ENCODE measurements at regions of chr6 and their contacts with region 1.

Region 1: GRCh38 chr6:27753668-27754407 is 158.4 kb downstream of the OR2B2 start:
- DNase-seq: peak; percentile 39 to 62 (median 51)
- H3K4me3 ChIP-seq: peak overlapping the region; percentile 22 to 81 (median 32)
- H3K4me3 Mint-ChIP-seq: peak overlapping the region; percentile 73 to 90
- H3K27ac ChIP-seq: no peak overlapping the region
- H3K27ac Mint-ChIP-seq: peak overlapping the region; percentile 45 to 82 (median 61)
- H3K4me1 ChIP-seq: peaks cover 34 to 42% of the 10 kb centered on the region in 2 donors
- H3K4me1 Mint-ChIP-seq: peaks cover 37% of the 10 kb centered on the region
- H3K27me3 ChIP-seq: no peaks in the 10 kb centered on the region
- H3K27me3 Mint-ChIP-seq: peaks cover 0 to 5% (median under 1%) of the 10 kb centered on the region in 3 donors
- CTCF ChIP-seq: no peak

Region 2: DNA sequence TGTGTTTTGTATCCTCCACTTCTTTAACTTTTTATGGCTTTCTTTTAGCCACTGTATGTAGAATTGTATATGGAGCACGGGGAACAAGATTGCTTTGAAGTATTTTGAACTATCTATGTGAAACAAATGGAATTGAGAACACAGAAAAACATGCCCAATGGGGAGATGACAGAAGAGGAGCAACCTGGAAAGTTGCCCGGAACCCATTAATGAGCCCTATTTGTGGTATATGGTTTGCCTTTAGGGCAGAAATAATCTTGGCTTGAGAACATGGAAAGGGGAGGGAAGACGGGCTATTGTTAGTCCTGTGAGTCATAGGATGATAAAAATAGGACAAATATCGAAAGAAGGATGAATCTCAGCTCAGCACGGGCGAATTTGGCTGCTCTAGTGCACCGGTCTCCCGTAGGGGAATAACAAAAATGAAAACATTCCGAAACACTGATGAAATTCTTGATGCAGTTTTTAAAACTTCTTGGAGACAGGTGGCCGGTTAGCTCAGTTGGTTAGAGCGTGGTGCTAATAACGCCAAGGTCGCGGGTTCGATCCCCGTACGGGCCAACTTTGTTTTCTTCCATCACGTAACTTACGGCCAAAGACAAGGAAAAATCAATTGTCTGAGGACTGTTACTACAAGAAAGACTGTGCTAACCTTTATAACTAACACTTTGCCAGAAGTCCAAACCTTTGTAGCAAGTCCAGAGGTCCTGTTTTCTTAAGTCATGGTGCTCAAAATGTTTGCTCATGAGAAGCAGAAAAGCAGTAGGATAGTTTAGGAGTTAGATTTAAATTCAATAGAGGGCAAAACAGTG is 1200.0 kb before region 1 on chr6:
- intact Hi-C with region 1: loop called in 1 of 2 experiments (anchors 10 kb)
- DNase-seq: peak; percentile 69 to 83 (median 78)
- H3K4me3 ChIP-seq: peak overlapping the region; percentile 41 to 81 (median 78)
- H3K4me3 Mint-ChIP-seq: no peak overlapping the region
- H3K27ac ChIP-seq: peak overlapping the region in 1 of 2 donors; percentile 21
- H3K27ac Mint-ChIP-seq: no peak overlapping the region
- H3K4me1 ChIP-seq: peaks cover 39 to 40% of the 10 kb centered on the region in 2 donors
- H3K4me1 Mint-ChIP-seq: peaks cover 13% of the 10 kb centered on the region
- H3K27me3 ChIP-seq: no peaks in the 10 kb centered on the region
- H3K27me3 Mint-ChIP-seq: peaks cover 2 to 8% (median 3%) of the 10 kb centered on the region in 3 donors
- CTCF ChIP-seq: no peak

Region 3: DNA sequence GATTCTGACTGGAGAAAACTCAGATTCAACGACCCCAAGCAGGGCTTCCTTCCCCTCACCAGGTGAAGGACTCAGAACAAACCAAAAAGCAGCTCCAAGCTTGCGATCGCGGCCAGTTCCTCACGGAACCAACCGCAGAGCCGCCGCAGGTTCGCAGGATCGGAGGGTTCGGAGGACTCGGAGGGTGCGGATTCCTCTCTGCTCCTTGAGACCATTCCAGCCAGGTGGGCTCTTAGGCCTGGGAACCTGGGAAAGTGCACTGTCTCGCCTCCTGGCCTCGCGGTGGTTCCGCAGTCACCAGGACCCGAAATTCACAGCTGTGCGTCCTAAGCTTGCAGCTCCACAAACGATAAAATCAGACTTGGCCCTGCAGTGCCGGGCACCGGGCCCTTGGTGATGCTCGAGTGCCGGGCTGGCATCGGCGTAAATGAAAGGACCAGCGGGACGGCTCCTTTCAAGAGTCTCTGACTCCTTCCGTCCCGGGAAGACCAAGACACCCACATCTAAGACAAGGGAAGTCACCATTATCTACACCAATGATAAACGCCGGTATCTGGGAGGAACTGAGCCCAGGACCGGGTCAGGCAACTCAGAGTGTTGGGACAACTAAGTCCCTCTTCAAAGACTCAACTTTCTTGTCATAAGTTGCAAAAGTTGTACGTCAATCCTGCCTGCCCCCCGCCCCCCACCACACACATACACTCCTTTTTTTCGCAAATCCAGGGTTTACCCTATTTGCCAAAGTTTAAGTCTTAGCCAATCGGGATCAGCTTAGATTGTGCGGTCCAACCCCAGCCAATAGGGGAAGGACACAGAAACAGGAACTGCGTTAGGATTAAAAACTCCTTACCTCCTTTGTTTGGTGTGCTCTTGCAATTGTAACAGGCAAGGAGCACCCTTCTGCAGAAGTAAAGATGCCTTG is 576.1 kb before region 1 on chr6:
- intact Hi-C with region 1: loop called in 1 of 2 experiments (anchors 10 kb)
- DNase-seq: peak; percentile 63 to 81 (median 63)
- H3K4me3 ChIP-seq: peak overlapping the region; percentile 50 to 87 (median 81)
- H3K4me3 Mint-ChIP-seq: peak overlapping the region; percentile 94 to 96
- H3K27ac ChIP-seq: peak overlapping the region; percentile 48 to 54
- H3K27ac Mint-ChIP-seq: peak overlapping the region; percentile 37 to 91 (median 79)
- H3K4me1 ChIP-seq: peaks cover 12 to 21% of the 10 kb centered on the region in 2 donors
- H3K4me1 Mint-ChIP-seq: peaks cover 20% of the 10 kb centered on the region
- H3K27me3 ChIP-seq: peaks cover 0 to 3% of the 10 kb centered on the region in 2 donors
- H3K27me3 Mint-ChIP-seq: peaks cover 10 to 27% (median 22%) of the 10 kb centered on the region in 3 donors
- CTCF ChIP-seq: peak; percentile 41

Region 4: GRCh38 chr6:27479319-27480182 is 274.3 kb before region 1 on chr6:
- intact Hi-C with region 1: loop called (anchors 2 to 5 kb)
- DNase-seq: peak; percentile 90 to 95 (median 93)
- H3K4me3 ChIP-seq: peak overlapping the region; percentile 97 to 100 (median 100)
- H3K4me3 Mint-ChIP-seq: no peak overlapping the region
- H3K27ac ChIP-seq: peak overlapping the region; percentile 96 to 100
- H3K27ac Mint-ChIP-seq: no peak overlapping the region
- H3K4me1 ChIP-seq: peaks cover 15 to 23% of the 10 kb centered on the region in 2 donors
- H3K4me1 Mint-ChIP-seq: no peaks in the 10 kb centered on the region
- H3K27me3 ChIP-seq: no peaks in the 10 kb centered on the region
- H3K27me3 Mint-ChIP-seq: peaks cover 0 to 5% (median 3%) of the 10 kb centered on the region in 3 donors
- CTCF ChIP-seq: no peak

Region 5: GRCh38 chr6:27518881-27519795 is 234.7 kb before region 1 on chr6:
- intact Hi-C with region 1: loop called in 1 of 2 experiments (anchors 5 kb)
- DNase-seq: peak; percentile 60 to 71 (median 66)
- H3K4me3 ChIP-seq: peak overlapping the region; percentile 73 to 94 (median 91)
- H3K4me3 Mint-ChIP-seq: peak overlapping the region; percentile 84 to 97
- H3K27ac ChIP-seq: peak overlapping the region; percentile 41 to 54
- H3K27ac Mint-ChIP-seq: peak overlapping the region in 4 of 7 donors; percentile 23 to 67 (median 62)
- H3K4me1 ChIP-seq: peaks cover 8 to 17% of the 10 kb centered on the region in 2 donors
- H3K4me1 Mint-ChIP-seq: peaks cover 21% of the 10 kb centered on the region
- H3K27me3 ChIP-seq: peaks cover 26 to 29% of the 10 kb centered on the region in 2 donors
- H3K27me3 Mint-ChIP-seq: peaks cover 30 to 43% (median 37%) of the 10 kb centered on the region in 3 donors
- CTCF ChIP-seq: peak; percentile 83

Region 6: DNA sequence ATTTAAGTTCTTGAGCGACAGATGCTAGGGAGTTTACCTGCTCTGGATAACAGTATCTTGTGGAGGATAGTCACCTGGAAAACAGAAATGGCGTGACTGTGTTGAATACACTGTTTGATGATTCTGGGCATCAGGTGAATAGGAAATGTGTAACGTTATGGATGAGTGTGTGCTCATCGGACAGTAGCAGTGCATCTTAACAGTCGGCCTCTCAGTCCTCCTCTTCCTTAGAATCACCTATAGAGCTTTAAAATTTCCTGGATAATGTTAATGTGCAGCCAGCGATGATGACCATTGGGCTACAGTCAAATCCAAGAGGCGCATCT is 59.3 kb before region 1 on chr6:
- intact Hi-C with region 1: loop called in 1 of 2 experiments (anchors 5 kb)
- DNase-seq: no peak
- H3K4me3 ChIP-seq: peak overlapping the region in 1 of 3 experiments; percentile 85
- H3K4me3 Mint-ChIP-seq: peak overlapping the region; percentile 93 to 98
- H3K27ac ChIP-seq: no peak overlapping the region
- H3K27ac Mint-ChIP-seq: no peak overlapping the region
- H3K4me1 ChIP-seq: peaks cover 10 to 13% of the 10 kb centered on the region in 2 donors
- H3K4me1 Mint-ChIP-seq: peaks cover 10% of the 10 kb centered on the region
- H3K27me3 ChIP-seq: peaks cover 0 to 23% of the 10 kb centered on the region in 2 donors
- H3K27me3 Mint-ChIP-seq: peaks cover 10 to 31% (median 26%) of the 10 kb centered on the region in 3 donors
- CTCF ChIP-seq: no peak

Region 7: DNA sequence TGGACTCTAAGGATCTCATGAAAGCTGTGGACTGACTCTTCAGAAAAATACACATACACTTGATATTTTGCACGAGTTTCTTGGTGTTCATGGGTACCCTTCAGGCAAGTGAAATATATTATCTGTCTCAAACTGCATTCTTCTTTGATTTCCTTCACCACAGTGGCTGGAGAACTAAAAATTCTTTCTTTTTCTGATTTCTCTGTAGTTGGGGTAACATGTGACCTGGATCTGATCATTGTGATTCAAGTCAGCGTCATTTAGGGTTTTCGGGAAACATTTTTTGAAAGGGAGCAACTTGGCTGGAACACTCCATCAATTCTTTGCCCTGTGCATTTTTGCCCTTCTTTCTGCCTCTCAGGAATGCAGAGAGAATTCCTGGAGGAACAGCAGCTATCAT is 47.4 kb before region 1 on chr6:
- intact Hi-C with region 1: no loop called
- DNase-seq: no peak
- H3K4me3 ChIP-seq: no peak overlapping the region
- H3K4me3 Mint-ChIP-seq: no peak overlapping the region
- H3K27ac ChIP-seq: no peak overlapping the region
- H3K27ac Mint-ChIP-seq: no peak overlapping the region
- H3K4me1 ChIP-seq: no peaks in the 10 kb centered on the region
- H3K4me1 Mint-ChIP-seq: no peaks in the 10 kb centered on the region
- H3K27me3 ChIP-seq: no peaks in the 10 kb centered on the region
- H3K27me3 Mint-ChIP-seq: peaks cover 0 to 2% (median 0%) of the 10 kb centered on the region in 3 donors
- CTCF ChIP-seq: no peak

Region 8: DNA sequence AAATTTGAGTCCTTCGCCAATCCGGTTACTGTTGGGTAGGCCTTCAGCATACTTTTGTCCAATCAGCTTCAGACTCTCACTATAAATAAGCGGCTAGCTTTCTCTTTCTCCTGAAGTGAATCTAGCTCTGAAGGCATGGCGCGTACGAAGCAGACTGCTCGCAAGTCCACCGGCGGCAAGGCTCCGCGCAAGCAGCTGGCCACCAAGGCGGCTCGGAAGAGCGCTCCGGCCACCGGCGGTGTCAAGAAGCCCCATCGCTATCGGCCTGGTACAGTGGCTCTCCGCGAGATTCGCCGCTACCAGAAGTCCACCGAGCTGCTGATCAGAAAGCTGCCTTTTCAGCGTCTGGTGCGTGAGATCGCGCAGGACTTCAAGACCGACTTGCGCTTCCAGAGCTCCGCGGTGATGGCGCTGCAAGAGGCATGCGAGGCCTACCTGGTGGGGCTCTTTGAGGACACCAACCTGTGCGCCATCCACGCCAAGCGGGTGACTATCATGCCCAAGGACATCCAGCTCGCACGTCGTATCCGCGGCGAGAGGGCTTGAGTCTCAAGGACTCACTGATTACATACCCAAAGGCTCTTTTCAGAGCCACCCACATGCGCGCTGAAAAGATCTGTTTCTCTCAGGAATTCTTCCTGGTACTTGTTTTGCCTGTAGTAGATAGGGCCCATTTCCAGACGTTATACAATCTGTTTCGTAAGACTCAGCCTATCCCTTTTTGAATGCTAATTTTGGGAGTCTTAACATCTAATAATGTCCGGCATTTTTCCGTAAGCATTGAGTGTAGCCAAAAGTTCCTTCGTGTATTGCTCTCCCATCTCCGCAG is 56.3 kb after region 1 on chr6:
- intact Hi-C with region 1: loop called in 1 of 2 experiments (anchors 5 kb)
- DNase-seq: peak; percentile 87 to 96 (median 91)
- H3K4me3 ChIP-seq: peak overlapping the region; percentile 62 to 87 (median 70)
- H3K4me3 Mint-ChIP-seq: peak overlapping the region; percentile 89 to 92
- H3K27ac ChIP-seq: peak overlapping the region; percentile 80 to 92
- H3K27ac Mint-ChIP-seq: peak overlapping the region; percentile 88 to 97 (median 94)
- H3K4me1 ChIP-seq: peaks cover 41 to 48% of the 10 kb centered on the region in 2 donors
- H3K4me1 Mint-ChIP-seq: peaks cover 49% of the 10 kb centered on the region
- H3K27me3 ChIP-seq: no peaks in the 10 kb centered on the region
- H3K27me3 Mint-ChIP-seq: peaks cover 0 to 4% (median 0%) of the 10 kb centered on the region in 3 donors
- CTCF ChIP-seq: no peak

Measured in CD14-positive monocyte (primary cell).